Body of pancreas (tissue), 4 donors: ENCODE measurements at regions of chr5 and their contacts with region 1.

Region 1: GRCh38 chr5:175712681-175713085 is 54.8 kb downstream of the HRH2 start:
- DNase-seq: no peak
- ATAC-seq: no peak
- H3K4me3 ChIP-seq: no peak overlapping the region
- H3K27ac ChIP-seq: no peak overlapping the region
- H3K4me1 ChIP-seq: no peaks in the 10 kb centered on the region
- H3K27me3 ChIP-seq: no peaks in the 10 kb centered on the region
- CTCF ChIP-seq: no peak
- POLR2A ChIP-seq: no peak

Region 2: GRCh38 chr5:175534070-175534932 is 178.4 kb before region 1 on chr5:
- intact Hi-C with region 1: loop called (anchors 5 kb)
- DNase-seq: peak; percentile 68 to 81 (median 74)
- ATAC-seq: peak; percentile 89
- H3K4me3 ChIP-seq: no peak overlapping the region
- H3K27ac ChIP-seq: no peak overlapping the region
- H3K4me1 ChIP-seq: peaks cover 9% of the 10 kb centered on the region
- H3K27me3 ChIP-seq: peaks cover 0 to 5% of the 10 kb centered on the region in 2 donors
- CTCF ChIP-seq: peak; percentile 88 to 100 (median 97)
- POLR2A ChIP-seq: no peak